ENCODE measurements at regions of chr10 and their contacts with region 1.

Region 1: DNA sequence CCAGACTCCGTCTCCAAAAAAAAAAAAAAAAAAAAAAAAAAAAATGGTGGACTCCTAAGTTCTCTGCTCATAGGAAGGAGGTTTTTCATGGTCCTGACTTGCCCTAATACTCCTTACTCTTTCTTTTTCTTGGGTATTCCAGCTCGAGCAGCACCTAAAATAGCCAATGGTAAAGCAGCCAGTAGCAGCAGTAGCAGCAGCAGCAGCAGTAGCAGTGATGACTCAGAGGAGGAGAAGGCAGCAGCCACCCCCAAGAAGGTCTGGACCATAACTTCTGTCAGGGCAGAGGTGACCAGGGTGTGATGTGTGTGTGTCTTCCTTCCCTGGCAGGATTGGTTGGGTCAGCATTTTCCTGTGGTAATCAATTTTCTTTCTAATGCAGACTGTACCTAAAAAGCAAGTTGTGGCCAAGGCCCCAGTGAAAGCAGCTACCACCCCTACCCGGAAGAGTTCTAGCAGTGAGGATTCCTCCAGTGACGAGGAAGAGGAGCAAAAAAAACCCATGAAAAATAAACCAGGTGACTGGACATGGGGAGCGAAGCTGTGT is 6.9 kb downstream of the NOLC1 start:
- DNase-seq: no peak
- CTCF ChIP-seq: no peak

Region 2: DNA sequence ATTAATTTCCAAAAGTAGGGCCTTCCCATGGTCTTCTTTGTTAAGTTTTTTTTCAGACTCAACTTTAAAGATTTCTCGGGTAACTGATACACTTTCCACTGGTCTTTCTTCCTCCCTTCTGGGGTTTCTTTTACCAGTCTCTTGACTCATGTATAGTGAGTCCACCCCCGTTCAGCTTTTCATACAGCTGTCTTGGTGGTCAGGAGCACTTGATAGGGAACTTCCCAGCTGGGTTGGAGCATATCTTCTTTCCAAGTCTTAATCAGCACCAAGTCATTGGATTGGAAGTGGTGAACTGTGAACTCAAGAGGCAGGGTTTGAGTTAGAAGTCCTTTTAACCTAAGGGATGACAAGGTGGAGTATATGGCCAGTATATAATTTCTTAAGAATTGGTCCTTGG is 37.8 kb after region 1 on chr10:
- CTCF ChIA-PET with region 1: no interaction called
- POLR2A ChIA-PET with region 1: no interaction called
- DNase-seq: peak; percentile 47
- CTCF ChIP-seq: no peak

Region 3: DNA sequence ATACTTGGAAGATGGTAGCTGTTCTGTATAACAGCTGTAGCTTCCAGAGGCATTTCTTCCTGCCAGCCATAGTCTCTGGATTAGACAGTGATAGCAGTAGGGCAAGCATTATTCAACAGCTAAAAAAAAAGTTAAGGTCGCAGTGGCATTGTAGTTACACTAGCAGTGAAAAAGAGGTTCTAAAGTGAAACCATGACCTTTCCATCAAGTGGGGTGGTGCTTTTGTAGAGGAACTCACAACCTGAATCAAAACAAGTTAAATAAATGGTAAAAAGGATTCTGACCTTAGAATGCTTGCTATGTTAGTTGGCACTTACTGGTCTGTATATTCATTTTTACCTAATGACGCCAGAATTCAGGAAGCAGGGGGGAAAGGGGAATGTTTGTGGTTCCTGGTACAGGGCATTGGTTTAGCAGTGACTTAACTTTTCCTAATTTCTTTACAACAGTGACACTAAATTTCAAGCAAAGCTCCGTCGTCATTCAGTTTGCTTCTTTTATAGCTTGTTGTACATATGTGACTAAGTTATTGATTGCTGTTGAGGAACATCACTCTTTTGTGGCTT is 141.2 kb after region 1 on chr10:
- CTCF ChIA-PET with region 1: no interaction called
- POLR2A ChIA-PET with region 1: no interaction called
- DNase-seq: no peak
- CTCF ChIP-seq: no peak

Region 4: DNA sequence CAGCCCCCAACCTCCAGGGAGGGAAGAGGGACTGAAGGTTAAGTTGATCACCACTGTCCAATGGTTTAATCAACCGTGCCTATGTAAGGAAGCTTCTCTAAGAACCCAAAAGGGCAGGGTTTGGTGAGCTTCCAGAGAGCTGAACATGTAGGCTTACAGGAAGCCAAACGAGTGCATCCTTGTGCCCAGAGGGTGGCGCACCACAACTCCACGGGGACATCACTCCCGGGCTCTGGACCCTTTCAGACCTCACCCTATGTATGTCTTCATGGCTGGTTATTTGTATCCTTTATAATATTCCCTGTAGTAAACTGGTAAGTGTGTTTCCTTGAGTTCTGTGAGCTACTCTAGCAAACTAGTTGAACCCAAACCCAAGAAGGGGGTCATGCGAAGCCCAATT is 224.9 kb after region 1 on chr10:
- CTCF ChIA-PET with region 1: no interaction called
- POLR2A ChIA-PET with region 1: interaction called, 10 read pairs
- DNase-seq: no peak
- CTCF ChIP-seq: no peak